SK-N-SH (cell line): ENCODE measurements at regions of chr17 and their contacts with region 1.

Region 1: GRCh38 chr17:39450847-39451581 is at the start of gene MED1:
- DNase-seq: peak; percentile 88
- H3K4me3 ChIP-seq: peak within 1 kb of the TSS; percentile 67 to 87
- H3K27ac ChIP-seq: peak within 1 kb of the TSS; percentile 77 to 85
- H3K4me1 ChIP-seq: peaks cover 4% of the 10 kb centered on the region in 2 experiments; a peak in 2 of 4 replicates
- H3K27me3 ChIP-seq: no peaks in the 10 kb centered on the region
- CTCF ChIP-seq: no peak
- EP300 ChIP-seq: no peak
- RAD21 ChIP-seq: no peak
- polyA plus RNA-seq, gene MED1: 12.3 and 19.9 TPM in 2 replicates

Region 2: GRCh38 chr17:39461113-39461925 is 10.3 kb after region 1 on chr17 and contains the start of gene CDK12:
- CTCF ChIA-PET with region 1: interaction called, 4 read pairs
- POLR2A ChIA-PET with region 1: interaction called, 41 read pairs
- DNase-seq: peak; percentile 94
- H3K4me3 ChIP-seq: peak within 1 kb of the TSS; percentile 74 to 77
- H3K27ac ChIP-seq: peak within 1 kb of the TSS; percentile 91 to 96
- H3K4me1 ChIP-seq: peaks cover 4 to 6% of the 10 kb centered on the region in 2 experiments; a peak in 2 of 4 replicates
- H3K27me3 ChIP-seq: no peaks in the 10 kb centered on the region
- CTCF ChIP-seq: no peak
- EP300 ChIP-seq: 0 out of 4 replicates have a peak, but pooled peaks of 1 of the 2 experiments have one; percentile 22
- RAD21 ChIP-seq: no peak
- polyA plus RNA-seq, gene CDK12: 11.6 and 15.7 TPM in 2 replicates